ENCODE measurements at regions of chr12 and their contacts with region 1.

Region 1: DNA sequence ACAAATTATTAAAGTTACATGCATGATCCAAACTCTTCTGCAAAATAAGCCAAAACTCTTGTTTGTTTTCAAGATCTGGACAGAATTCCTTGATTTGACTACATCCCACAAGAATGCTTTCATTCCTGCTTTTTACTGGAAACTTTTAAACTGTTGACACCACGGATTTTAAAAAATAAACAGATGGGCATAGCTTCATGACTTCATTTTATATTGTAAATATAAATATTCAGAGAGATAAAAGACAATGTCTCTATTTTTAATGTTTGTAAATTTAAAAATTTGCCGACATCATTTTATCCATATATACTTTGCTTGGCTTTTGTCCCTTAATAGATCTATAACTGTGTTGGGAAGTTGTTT is 134.3 kb upstream of the DCN start:
- DNase-seq: peak in 2 of 4 donors; percentile 36 to 49
- ATAC-seq: no peak
- H3K4me3 ChIP-seq: no peak overlapping the region
- H3K27ac ChIP-seq: peak overlapping the region in 1 of 2 donors; percentile 40
- H3K4me1 ChIP-seq: peaks cover 0 to 6% of the 10 kb centered on the region in 2 donors
- H3K27me3 ChIP-seq: no peaks in the 10 kb centered on the region
- CTCF ChIP-seq: no peak

Region 2: DNA sequence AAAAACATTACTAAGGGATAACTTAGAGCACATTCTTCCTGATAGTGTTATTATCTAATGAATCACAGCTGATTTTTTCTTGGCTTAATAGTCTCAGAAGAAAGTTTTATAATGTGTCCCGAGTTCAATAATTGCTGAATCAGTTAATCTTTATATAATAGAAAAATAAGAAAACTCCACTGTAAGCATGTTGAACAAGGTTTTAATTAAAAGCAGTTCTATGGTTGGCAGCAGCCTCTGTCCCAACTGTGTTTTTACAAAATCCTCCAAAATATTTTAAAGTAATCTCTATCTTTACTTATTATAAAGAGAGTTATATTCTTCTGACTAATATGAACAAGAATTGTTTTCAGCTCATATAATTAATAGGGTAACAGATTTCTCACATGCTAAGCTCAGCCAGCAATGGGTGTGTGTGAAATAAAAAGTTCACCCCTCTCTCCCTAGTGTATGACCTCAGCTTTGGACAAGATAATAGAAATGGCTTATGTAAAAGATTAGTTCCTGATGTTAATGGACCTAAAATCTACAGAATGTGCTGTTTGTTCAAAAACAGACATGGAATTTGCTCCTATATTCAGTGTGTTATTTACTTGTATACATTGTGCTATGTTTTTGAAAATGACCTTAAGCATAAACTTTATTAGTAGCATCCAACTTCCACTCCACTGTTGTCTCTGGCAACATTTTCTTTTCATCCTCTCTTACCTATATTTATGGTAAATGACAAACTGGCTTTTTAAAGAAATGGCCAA is 67.2 kb before region 1 on chr12:
- intact Hi-C with region 1: loop called in 1 of 2 experiments (anchors 10 kb)
- DNase-seq: peak in 2 of 4 donors; percentile 63 to 72
- ATAC-seq: peak; percentile 76
- H3K4me3 ChIP-seq: no peak overlapping the region
- H3K27ac ChIP-seq: peak overlapping the region in 1 of 2 donors; percentile 64
- H3K4me1 ChIP-seq: no peaks in the 10 kb centered on the region
- H3K27me3 ChIP-seq: peaks cover 0 to 2% of the 10 kb centered on the region in 2 donors
- CTCF ChIP-seq: no peak